A673 (cell line): ENCODE measurements at regions of chr1 and their contacts with region 1.

Region 1: DNA sequence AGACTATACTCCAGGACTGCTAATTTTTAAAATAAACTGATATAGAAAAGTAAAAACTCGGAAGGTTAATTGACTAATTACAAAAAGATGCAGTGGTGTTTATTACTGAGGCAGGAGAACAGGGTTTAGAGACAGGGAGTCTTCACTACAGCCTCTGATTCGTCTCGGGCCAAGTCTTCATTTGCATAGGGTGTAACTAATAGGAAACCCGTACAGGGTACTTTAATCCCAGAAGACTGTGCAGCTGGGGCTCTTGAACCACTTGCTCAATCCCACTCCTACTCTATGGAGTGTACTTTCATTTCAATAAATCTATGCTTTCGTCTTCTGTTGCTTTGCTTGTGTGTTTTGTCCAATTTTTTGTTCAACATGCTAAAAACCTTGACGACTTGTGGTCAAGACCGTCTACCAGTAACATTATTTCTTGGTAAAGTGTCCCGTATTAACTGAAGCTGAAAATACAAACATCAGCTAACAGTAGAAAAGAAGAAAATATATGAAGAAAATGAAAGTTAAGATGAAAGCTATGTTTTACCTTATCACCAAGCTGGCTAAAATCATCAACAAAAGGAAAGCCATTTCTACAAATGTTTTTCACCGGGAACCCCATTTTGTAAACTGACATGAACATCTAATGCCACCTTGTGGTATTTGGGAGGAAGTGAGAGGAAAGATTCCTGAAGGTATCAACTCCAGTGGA is 8.0 kb downstream of the SDHB start:
- DNase-seq: peak; percentile 82
- H3K4me3 ChIP-seq: peak overlapping the region; percentile 49
- H3K27ac ChIP-seq: peak overlapping the region; percentile 57
- H3K4me1 ChIP-seq: peaks cover 8% of the 10 kb centered on the region
- H3K27me3 ChIP-seq: no peaks in the 10 kb centered on the region
- CTCF ChIP-seq: peak; percentile 82

Region 2: DNA sequence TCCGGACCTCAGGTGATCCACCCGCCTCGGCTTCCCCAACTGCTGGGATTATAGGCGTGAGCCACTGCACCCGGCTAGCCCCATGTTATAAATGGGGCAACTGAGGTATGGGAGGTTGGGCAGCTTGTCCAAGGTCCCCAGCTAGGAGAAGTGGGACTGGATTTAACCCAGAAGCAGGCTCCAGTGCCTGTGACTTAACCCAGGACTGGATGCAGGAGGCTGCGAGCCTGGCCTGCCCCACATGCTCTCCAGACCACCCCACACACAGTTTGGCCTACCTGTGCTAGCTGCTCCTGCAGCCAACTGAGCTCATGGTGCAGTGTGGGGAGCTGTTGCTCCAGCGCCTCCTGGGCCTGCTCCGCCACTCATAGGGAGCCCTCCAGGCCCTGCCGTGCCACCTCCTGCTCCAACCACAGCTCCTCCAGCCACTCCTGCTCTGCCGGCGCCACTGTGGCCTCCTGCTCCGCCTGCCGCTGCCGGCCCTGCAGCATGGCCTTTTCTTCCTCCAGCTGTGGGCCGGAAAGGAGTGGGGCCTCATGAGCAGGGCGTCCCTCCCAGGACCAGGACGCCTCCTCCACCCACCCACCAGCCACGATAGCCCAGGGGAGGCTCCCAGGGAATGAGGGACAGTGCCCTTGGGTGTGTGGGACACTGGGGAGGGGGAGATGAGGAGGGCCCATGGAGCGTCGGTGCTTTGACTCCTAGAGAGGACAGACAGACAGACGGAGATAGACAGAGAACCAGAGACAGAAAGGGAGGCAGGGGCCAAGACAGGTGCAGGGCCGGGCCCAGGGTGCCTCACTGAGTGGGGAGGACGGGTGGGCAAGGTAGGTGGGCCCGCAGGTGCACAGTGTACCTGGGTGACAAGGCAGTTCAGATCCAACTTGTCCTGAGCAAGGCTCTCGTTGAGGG is 420.0 kb before region 1 on chr1:
- CTCF ChIA-PET with region 1: interaction called, 4 read pairs
- POLR2A ChIA-PET with region 1: no interaction called
- intact Hi-C with region 1: loop called (anchors 10 kb)
- DNase-seq: no peak
- H3K4me3 ChIP-seq: no peak overlapping the region
- H3K27ac ChIP-seq: no peak overlapping the region
- H3K4me1 ChIP-seq: no peaks in the 10 kb centered on the region
- H3K27me3 ChIP-seq: no peaks in the 10 kb centered on the region
- CTCF ChIP-seq: no peak

Region 3: GRCh38 chr1:16944038-16944437 is 101.7 kb before region 1 on chr1:
- CTCF ChIA-PET with region 1: no interaction called
- POLR2A ChIA-PET with region 1: no interaction called
- intact Hi-C with region 1: no loop called
- DNase-seq: no peak
- H3K4me3 ChIP-seq: no peak overlapping the region
- H3K27ac ChIP-seq: no peak overlapping the region
- H3K4me1 ChIP-seq: no peaks in the 10 kb centered on the region
- H3K27me3 ChIP-seq: no peaks in the 10 kb centered on the region
- CTCF ChIP-seq: no peak